ENCODE measurements at regions of chr17 and their contacts with region 1.

Region 1: GRCh38 chr17:30291543-30292285 is at the start of gene BLMH:
- DNase-seq: peak; percentile 61 to 88 (median 80)
- ATAC-seq: peak; percentile 85
- H3K4me3 ChIP-seq: peak within 1 kb of the TSS; percentile 91
- H3K4me3 Mint-ChIP-seq: peak within 1 kb of the TSS; percentile 98
- H3K27ac ChIP-seq: no peak within 1 kb of the TSS
- H3K27ac Mint-ChIP-seq: peak within 1 kb of the TSS; percentile 84
- H3K4me1 ChIP-seq: peaks cover 8% of the 10 kb centered on the region
- H3K4me1 Mint-ChIP-seq: peaks cover 24% of the 10 kb centered on the region
- H3K27me3 ChIP-seq: no peaks in the 10 kb centered on the region
- H3K27me3 Mint-ChIP-seq: no peaks in the 10 kb centered on the region
- CTCF ChIP-seq: no peak
- total RNA-seq, gene BLMH: 32.9 to 36.5 TPM

Region 2: GRCh38 chr17:30113213-30113612 is 178.5 kb before region 1 on chr17:
- CTCF ChIA-PET with region 1: no interaction called
- POLR2A ChIA-PET with region 1: no interaction called
- intact Hi-C with region 1: no loop called
- DNase-seq: peak in 1 of 14 experiments; percentile 23
- ATAC-seq: no peak
- H3K4me3 ChIP-seq: no peak overlapping the region
- H3K4me3 Mint-ChIP-seq: no peak overlapping the region
- H3K27ac ChIP-seq: no peak overlapping the region
- H3K27ac Mint-ChIP-seq: no peak overlapping the region
- H3K4me1 ChIP-seq: peaks cover 7% of the 10 kb centered on the region
- H3K4me1 Mint-ChIP-seq: peaks cover 17% of the 10 kb centered on the region
- H3K27me3 ChIP-seq: no peaks in the 10 kb centered on the region
- H3K27me3 Mint-ChIP-seq: no peaks in the 10 kb centered on the region
- CTCF ChIP-seq: no peak

Region 3: DNA sequence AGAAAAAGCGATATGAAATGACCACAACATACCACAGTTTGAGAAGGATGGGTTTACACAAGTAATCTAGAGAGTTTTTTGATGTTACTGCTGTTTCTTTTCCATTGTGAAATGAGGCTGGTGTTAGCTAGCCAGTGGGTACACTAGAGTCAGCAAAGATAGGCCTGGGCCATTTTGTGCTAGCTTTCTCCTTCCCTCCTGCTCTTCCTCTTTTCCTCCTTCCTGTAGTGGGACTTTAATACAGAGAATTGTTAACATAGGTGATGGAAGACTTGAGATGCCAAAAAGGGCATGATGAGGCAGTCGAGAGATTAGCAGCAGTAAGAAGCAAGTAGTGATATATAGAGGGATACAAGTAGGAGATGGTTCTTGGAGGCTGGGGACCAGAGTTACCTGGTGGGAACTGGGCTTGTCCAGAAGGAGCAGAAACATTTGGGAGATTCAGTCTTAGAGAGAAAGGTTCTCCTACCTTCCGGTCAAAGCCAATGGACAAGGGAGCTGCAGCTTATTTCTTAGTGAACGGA is 167.4 kb before region 1 on chr17:
- CTCF ChIA-PET with region 1: no interaction called
- POLR2A ChIA-PET with region 1: interaction called, 4 read pairs
- intact Hi-C with region 1: loop called in 1 of 2 experiments (anchors 5 kb)
- DNase-seq: no peak
- ATAC-seq: no peak
- H3K4me3 ChIP-seq: no peak overlapping the region
- H3K4me3 Mint-ChIP-seq: no peak overlapping the region
- H3K27ac ChIP-seq: no peak overlapping the region
- H3K27ac Mint-ChIP-seq: peak overlapping the region; percentile 27
- H3K4me1 ChIP-seq: peaks cover 10% of the 10 kb centered on the region
- H3K4me1 Mint-ChIP-seq: peaks cover 42% of the 10 kb centered on the region
- H3K27me3 ChIP-seq: no peaks in the 10 kb centered on the region
- H3K27me3 Mint-ChIP-seq: no peaks in the 10 kb centered on the region
- CTCF ChIP-seq: no peak

Region 4: GRCh38 chr17:30187573-30187972 is 104.1 kb before region 1 on chr17:
- CTCF ChIA-PET with region 1: no interaction called
- POLR2A ChIA-PET with region 1: no interaction called
- intact Hi-C with region 1: no loop called
- DNase-seq: no peak
- ATAC-seq: no peak
- H3K4me3 ChIP-seq: no peak overlapping the region
- H3K4me3 Mint-ChIP-seq: no peak overlapping the region
- H3K27ac ChIP-seq: no peak overlapping the region
- H3K27ac Mint-ChIP-seq: peak overlapping the region; percentile 19
- H3K4me1 ChIP-seq: no peaks in the 10 kb centered on the region
- H3K4me1 Mint-ChIP-seq: no peaks in the 10 kb centered on the region
- H3K27me3 ChIP-seq: no peaks in the 10 kb centered on the region
- H3K27me3 Mint-ChIP-seq: no peaks in the 10 kb centered on the region
- CTCF ChIP-seq: no peak

Region 5: GRCh38 chr17:30323895-30324319 is 32.2 kb after region 1 on chr17:
- CTCF ChIA-PET with region 1: interaction called, 5 read pairs
- POLR2A ChIA-PET with region 1: interaction called, 42 read pairs
- intact Hi-C with region 1: no loop called
- DNase-seq: peak in 13 of 14 experiments; percentile 14 to 69 (median 39)
- ATAC-seq: peak; percentile 59
- H3K4me3 ChIP-seq: no peak overlapping the region
- H3K4me3 Mint-ChIP-seq: peak overlapping the region; percentile 58
- H3K27ac ChIP-seq: peak overlapping the region; percentile 51 to 53
- H3K27ac Mint-ChIP-seq: peak overlapping the region; percentile 88
- H3K4me1 ChIP-seq: peaks cover 36% of the 10 kb centered on the region
- H3K4me1 Mint-ChIP-seq: peaks cover 58% of the 10 kb centered on the region
- H3K27me3 ChIP-seq: no peaks in the 10 kb centered on the region
- H3K27me3 Mint-ChIP-seq: no peaks in the 10 kb centered on the region
- CTCF ChIP-seq: no peak

Region 6: DNA sequence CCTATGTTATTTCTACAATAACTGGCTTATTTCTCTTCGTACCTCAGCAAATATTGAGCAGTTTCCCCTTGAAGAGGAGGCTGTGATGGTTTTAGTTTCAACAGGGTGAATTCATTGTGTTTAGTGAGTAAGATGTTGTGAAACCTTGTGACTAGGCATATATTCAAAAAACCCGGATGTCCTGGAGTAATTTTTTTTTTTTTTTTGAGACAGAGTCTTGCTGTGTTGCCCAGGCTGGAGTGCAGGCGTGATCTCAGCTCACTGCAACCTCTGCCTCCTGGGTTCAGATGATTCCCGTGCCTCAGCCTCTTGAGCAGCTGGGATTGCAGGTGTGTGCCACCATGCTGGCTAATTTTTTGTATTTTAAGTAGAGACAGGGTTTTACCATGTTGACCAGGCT is 98.1 kb after region 1 on chr17:
- CTCF ChIA-PET with region 1: no interaction called
- POLR2A ChIA-PET with region 1: no interaction called
- intact Hi-C with region 1: no loop called
- DNase-seq: peak in 1 of 14 experiments; percentile 21
- ATAC-seq: no peak
- H3K4me3 ChIP-seq: no peak overlapping the region
- H3K4me3 Mint-ChIP-seq: no peak overlapping the region
- H3K27ac ChIP-seq: no peak overlapping the region
- H3K27ac Mint-ChIP-seq: no peak overlapping the region
- H3K4me1 ChIP-seq: no peaks in the 10 kb centered on the region
- H3K4me1 Mint-ChIP-seq: peaks cover 13% of the 10 kb centered on the region
- H3K27me3 ChIP-seq: no peaks in the 10 kb centered on the region
- H3K27me3 Mint-ChIP-seq: no peaks in the 10 kb centered on the region
- CTCF ChIP-seq: no peak